ENCODE measurements at regions of chr11 and their contacts with region 1.

Region 1: GRCh38 chr11:61477727-61478148 is 30.8 kb upstream of the LRRC10B start:
- DNase-seq: peak; percentile 64
- ATAC-seq: peak; percentile 27; the same call in 1 of the 2 replicates
- H3K4me3 ChIP-seq: no peak overlapping the region
- H3K27ac ChIP-seq: no peak overlapping the region
- H3K4me1 ChIP-seq: peaks cover 15% of the 10 kb centered on the region; the same call in 1 of the 2 replicates
- H3K27me3 ChIP-seq: no peaks in the 10 kb centered on the region
- CTCF ChIP-seq: peak; percentile 99

Region 2: GRCh38 chr11:61446211-61446651 is 31.5 kb before region 1 on chr11:
- CTCF ChIA-PET with region 1: interaction called, 4 read pairs
- POLR2A ChIA-PET with region 1: no interaction called
- intact Hi-C with region 1: loop called (anchors 2 kb)
- DNase-seq: peak; percentile 98
- ATAC-seq: peak; percentile 99
- H3K4me3 ChIP-seq: no peak overlapping the region
- H3K27ac ChIP-seq: no peak overlapping the region
- H3K4me1 ChIP-seq: 0 out of 2 replicates have a peak, but pooled peaks cover 3% of the 10 kb centered on the region
- H3K27me3 ChIP-seq: no peaks in the 10 kb centered on the region
- CTCF ChIP-seq: peak; percentile 98

Region 3: GRCh38 chr11:61488651-61489291 is 11.0 kb after region 1 on chr11:
- CTCF ChIA-PET with region 1: no interaction called
- POLR2A ChIA-PET with region 1: interaction called, 10 read pairs
- intact Hi-C with region 1: no loop called
- DNase-seq: peak; percentile 90
- ATAC-seq: peak; percentile 73
- H3K4me3 ChIP-seq: peak overlapping the region; percentile 54
- H3K27ac ChIP-seq: peak overlapping the region; percentile 77
- H3K4me1 ChIP-seq: peaks cover 43% of the 10 kb centered on the region
- H3K27me3 ChIP-seq: no peaks in the 10 kb centered on the region
- CTCF ChIP-seq: no peak

Region 4: DNA sequence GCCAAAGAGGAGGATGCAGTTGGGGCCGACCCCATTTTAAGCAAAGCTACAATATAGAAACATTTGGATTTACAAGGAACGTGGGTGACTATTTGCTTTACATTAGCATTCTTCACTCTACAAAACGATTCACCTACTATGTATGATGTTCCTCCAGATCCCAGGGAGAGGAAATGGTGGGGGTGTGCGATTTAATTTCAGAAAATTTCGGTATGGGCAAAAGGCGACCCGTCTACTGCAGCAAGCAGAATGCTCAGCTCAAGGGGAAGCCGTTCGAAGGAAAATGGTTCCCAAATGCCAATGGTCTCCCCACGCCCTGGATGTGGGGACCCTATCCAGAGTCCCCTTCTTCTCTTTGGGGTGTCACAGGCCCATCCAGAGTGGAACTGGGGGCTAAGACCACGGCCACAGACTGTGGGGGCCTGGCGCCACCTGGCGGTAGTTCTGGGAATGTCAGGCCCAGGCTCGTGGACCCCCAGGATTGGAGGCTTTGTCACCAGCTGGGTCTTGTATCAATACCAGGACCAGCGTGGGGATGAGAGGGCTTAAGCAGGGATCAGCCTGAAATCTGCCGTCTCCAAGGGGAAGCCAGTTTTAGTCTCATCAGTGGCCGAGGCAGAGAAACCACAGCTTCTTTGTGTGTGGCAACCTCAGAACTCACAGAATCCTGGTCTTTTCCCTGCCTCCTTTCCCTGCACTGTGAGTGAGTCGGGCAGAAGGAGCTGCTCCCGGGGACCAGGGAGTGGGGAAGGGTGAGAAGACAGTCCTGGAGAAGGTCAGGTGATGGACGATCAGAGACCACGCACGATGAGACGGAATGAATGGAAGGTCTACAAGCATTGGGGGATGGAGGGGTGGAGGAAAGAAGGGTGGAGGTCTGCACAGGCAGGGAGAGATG is 39.2 kb after region 1 on chr11:
- CTCF ChIA-PET with region 1: interaction called, 8 read pairs
- POLR2A ChIA-PET with region 1: no interaction called
- intact Hi-C with region 1: loop called (anchors 2 kb)
- DNase-seq: peak; percentile 43
- ATAC-seq: peak; percentile 28; the same call in 1 of the 2 replicates
- H3K4me3 ChIP-seq: no peak overlapping the region
- H3K27ac ChIP-seq: no peak overlapping the region
- H3K4me1 ChIP-seq: peaks cover 11% of the 10 kb centered on the region
- H3K27me3 ChIP-seq: no peaks in the 10 kb centered on the region
- CTCF ChIP-seq: peak; percentile 99

Region 5: DNA sequence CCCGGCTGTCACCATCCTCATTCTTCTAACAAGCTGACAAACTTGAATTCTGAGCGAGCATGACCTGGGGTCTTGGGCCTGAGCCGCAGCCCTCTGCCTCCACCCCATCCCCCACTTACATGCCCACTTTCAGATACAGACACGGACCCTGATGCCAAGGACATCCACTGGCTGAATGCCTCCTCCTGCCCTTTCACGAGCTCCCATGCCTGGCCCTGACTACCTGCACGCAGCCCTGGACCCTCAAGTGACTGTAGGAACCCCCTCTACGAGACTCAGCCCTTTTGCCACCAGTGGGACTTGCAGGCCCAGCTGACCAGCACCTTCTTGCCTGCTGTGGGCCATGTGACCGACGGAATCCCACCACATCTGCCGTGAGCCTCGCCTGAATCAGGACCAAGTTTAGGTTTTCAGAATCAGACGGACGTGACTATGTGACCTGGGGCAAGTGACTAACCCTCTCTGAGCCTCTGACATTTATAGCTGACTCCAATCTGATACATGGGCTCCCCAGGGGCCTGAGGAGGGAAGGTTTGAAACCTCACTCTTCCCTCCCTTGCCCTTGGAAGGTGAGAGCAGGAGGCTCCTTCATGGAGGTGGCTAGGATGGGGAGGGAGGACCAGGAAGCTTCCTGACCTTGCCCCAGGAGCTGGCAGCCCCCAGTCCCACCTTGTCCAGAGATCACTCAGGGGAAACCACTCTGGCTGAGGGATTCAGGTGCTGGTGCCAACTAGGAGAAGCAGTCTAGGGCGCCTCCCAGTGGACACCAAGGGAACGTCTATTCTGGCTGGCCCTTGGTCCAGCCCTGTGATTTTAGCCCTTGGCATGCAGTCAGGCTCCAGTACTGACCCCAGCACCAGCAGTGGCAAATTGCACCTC is 150.1 kb after region 1 on chr11:
- CTCF ChIA-PET with region 1: no interaction called
- POLR2A ChIA-PET with region 1: no interaction called
- intact Hi-C with region 1: loop called (anchors 2 kb)
- DNase-seq: peak; percentile 89
- ATAC-seq: peak; percentile 78
- H3K4me3 ChIP-seq: no peak overlapping the region
- H3K27ac ChIP-seq: peak overlapping the region; percentile 85
- H3K4me1 ChIP-seq: peaks cover 23% of the 10 kb centered on the region
- H3K27me3 ChIP-seq: no peaks in the 10 kb centered on the region
- CTCF ChIP-seq: peak; percentile 98

Region 6: DNA sequence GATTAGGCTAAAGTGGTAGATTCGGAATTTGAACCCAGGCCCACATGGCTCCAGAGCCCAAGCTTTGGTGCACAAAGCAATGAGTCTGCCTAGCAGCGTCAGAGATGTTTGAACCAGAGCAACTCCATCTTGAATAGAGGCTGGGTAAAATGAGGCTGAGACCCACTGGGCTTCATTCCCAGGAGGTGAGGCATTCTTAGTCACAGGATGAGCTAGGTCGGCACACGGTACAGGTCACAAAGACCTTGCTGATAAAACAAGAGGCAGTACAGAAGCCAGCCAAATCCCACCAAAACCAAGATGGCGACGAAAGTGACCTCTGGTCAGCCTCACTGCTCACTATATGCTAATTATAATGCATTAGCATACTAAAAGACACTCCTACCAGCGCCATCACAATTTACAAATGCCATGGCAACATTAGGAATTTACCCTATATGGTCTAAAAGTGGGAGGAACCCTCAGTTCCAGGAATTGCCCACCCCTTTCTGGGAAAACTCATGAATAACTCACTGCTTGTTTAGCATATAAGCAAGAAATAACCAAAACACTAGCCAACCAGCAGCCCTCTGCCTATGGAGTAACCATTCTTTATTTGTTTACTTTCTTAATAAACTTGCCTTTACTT is 162.2 kb after region 1 on chr11:
- CTCF ChIA-PET with region 1: interaction called, 4 read pairs
- POLR2A ChIA-PET with region 1: no interaction called
- intact Hi-C with region 1: loop called (anchors 1 kb)
- DNase-seq: peak; percentile 72
- ATAC-seq: peak; percentile 16; the same call in 1 of the 2 replicates
- H3K4me3 ChIP-seq: no peak overlapping the region
- H3K27ac ChIP-seq: no peak overlapping the region
- H3K4me1 ChIP-seq: peaks cover 18% of the 10 kb centered on the region
- H3K27me3 ChIP-seq: no peaks in the 10 kb centered on the region
- CTCF ChIP-seq: no peak

Region 7: GRCh38 chr11:61733120-61733978 is 255.6 kb after region 1 on chr11:
- CTCF ChIA-PET with region 1: no interaction called
- POLR2A ChIA-PET with region 1: no interaction called
- intact Hi-C with region 1: loop called (anchors 5 kb)
- DNase-seq: peak; percentile 96
- ATAC-seq: peak; percentile 42
- H3K4me3 ChIP-seq: no peak overlapping the region
- H3K27ac ChIP-seq: peak overlapping the region; percentile 13
- H3K4me1 ChIP-seq: peaks cover 48% of the 10 kb centered on the region
- H3K27me3 ChIP-seq: no peaks in the 10 kb centered on the region
- CTCF ChIP-seq: peak; percentile 99

Measured in PC-3 (cell line).